Endothelial cell of umbilical vein (primary cell): ENCODE measurements at regions of chr17 and their contacts with region 1.

Region 1: GRCh38 chr17:82230627-82231311 is 1.9 kb downstream of the SLC16A3 start:
- DNase-seq: peak; percentile 75
- H3K4me3 ChIP-seq: peak overlapping the region; percentile 53 to 89 (median 71)
- H3K27ac ChIP-seq: peak overlapping the region; percentile 55
- H3K4me1 ChIP-seq: peaks cover 21% of the 10 kb centered on the region
- H3K27me3 ChIP-seq: no peaks in the 10 kb centered on the region
- CTCF ChIP-seq: peak in 1 of 2 donors; percentile 65
- POLR2A ChIP-seq: peak; percentile 44

Region 2: GRCh38 chr17:82037113-82037888 is 193.5 kb before region 1 on chr17 and contains the start of gene DCXR:
- CTCF ChIA-PET with region 1: interaction called, 5 read pairs
- POLR2A ChIA-PET with region 1: no interaction called
- dilution Hi-C with region 1: no loop called
- intact Hi-C with region 1: loop called (anchors 10 kb)
- DNase-seq: peak; percentile 97
- H3K4me3 ChIP-seq: peak within 1 kb of the TSS; percentile 58 to 71 (median 69)
- H3K27ac ChIP-seq: peak within 1 kb of the TSS; percentile 36
- H3K4me1 ChIP-seq: peaks cover 9% of the 10 kb centered on the region
- H3K27me3 ChIP-seq: no peaks in the 10 kb centered on the region
- CTCF ChIP-seq: peak; percentile 87 to 92
- POLR2A ChIP-seq: peak; percentile 80
- total RNA-seq, gene DCXR: 75.2 and 93.0 TPM in 2 replicates

Region 3: GRCh38 chr17:82098072-82098821 is 132.5 kb before region 1 on chr17 and contains the start of gene FASN:
- CTCF ChIA-PET with region 1: no interaction called
- POLR2A ChIA-PET with region 1: no interaction called
- dilution Hi-C with region 1: no loop called
- intact Hi-C with region 1: loop called (anchors 5 kb)
- DNase-seq: peak; percentile 93
- H3K4me3 ChIP-seq: peak within 1 kb of the TSS; percentile 35 to 78 (median 54)
- H3K27ac ChIP-seq: peak within 1 kb of the TSS; percentile 76
- H3K4me1 ChIP-seq: peaks cover 20% of the 10 kb centered on the region
- H3K27me3 ChIP-seq: no peaks in the 10 kb centered on the region
- CTCF ChIP-seq: peak; percentile 25 to 56
- POLR2A ChIP-seq: peak; percentile 87
- total RNA-seq, gene FASN: 351 and 360 TPM in 2 replicates

Region 4: GRCh38 chr17:82205719-82206508 is 24.9 kb before region 1 on chr17:
- CTCF ChIA-PET with region 1: interaction called, 104 read pairs
- POLR2A ChIA-PET with region 1: interaction called, 6 read pairs
- dilution Hi-C with region 1: no loop called
- intact Hi-C with region 1: loop called (anchors 1 kb)
- DNase-seq: peak; percentile 77
- H3K4me3 ChIP-seq: no peak overlapping the region
- H3K27ac ChIP-seq: peak overlapping the region; percentile 35
- H3K4me1 ChIP-seq: peaks cover 7% of the 10 kb centered on the region
- H3K27me3 ChIP-seq: no peaks in the 10 kb centered on the region
- CTCF ChIP-seq: peak; percentile 86 to 89
- POLR2A ChIP-seq: peak; percentile 80

Region 5: GRCh38 chr17:82212331-82213250 is 18.2 kb before region 1 on chr17 and contains the start of gene CCDC57:
- CTCF ChIA-PET with region 1: no interaction called
- POLR2A ChIA-PET with region 1: interaction called, 3 read pairs
- dilution Hi-C with region 1: no loop called
- intact Hi-C with region 1: loop called (anchors 1 kb)
- DNase-seq: peak; percentile 62
- H3K4me3 ChIP-seq: peak within 1 kb of the TSS; percentile 59 to 70 (median 62)
- H3K27ac ChIP-seq: peak within 1 kb of the TSS; percentile 72
- H3K4me1 ChIP-seq: peaks cover 29% of the 10 kb centered on the region
- H3K27me3 ChIP-seq: no peaks in the 10 kb centered on the region
- CTCF ChIP-seq: no peak
- POLR2A ChIP-seq: peak; percentile 36
- total RNA-seq, gene CCDC57: 31.6 and 40.9 TPM in 2 replicates

Region 6: GRCh38 chr17:82287849-82288601 is 57.3 kb after region 1 on chr17:
- CTCF ChIA-PET with region 1: no interaction called
- POLR2A ChIA-PET with region 1: no interaction called
- dilution Hi-C with region 1: no loop called
- intact Hi-C with region 1: no loop called
- DNase-seq: peak; percentile 73
- H3K4me3 ChIP-seq: no peak overlapping the region
- H3K27ac ChIP-seq: peak overlapping the region; percentile 46
- H3K4me1 ChIP-seq: peaks cover 15% of the 10 kb centered on the region
- H3K27me3 ChIP-seq: no peaks in the 10 kb centered on the region
- CTCF ChIP-seq: no peak
- POLR2A ChIP-seq: no peak